Right cardiac atrium (tissue), 5 donors: ENCODE measurements at regions of chr14 and their contacts with region 1.

Region 1: DNA sequence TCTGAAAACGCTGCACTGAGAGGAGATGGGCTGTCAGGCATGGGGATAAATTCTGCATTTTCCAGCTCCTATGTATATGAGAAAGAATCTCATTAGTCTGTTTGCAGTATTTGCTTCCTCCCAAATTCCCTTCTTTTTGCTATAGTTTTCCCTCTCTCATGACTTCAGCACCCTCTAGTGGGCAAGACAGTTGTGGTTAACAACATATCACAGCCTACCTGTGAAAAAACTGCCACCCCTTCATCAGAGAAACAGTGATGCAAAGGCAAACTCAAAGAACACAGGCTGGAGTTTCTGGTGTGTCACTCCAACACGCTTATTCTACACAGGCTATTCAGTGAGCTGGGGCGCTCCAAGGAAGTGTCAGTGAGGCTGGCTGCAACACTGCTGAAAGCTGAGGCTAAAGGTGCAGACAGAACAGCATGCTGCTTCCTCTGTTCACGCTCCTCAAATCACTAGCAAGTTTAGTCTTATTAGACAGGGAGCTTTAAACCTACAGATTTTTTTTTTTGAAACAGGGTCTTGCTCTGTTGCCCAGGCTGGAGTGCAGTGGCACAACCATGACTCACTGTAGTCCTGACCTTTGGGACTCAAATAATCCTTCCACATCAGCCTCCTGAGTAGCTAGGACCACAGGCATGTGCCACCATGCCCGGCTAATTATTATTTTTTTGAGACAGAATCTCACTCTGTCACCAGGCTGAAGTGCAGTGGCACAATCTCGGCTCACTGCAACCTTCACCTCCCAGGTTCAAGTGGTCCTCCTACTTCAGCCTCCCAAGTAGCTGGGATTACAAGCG is 19.3 kb downstream of the ZC2HC1C start:
- DNase-seq: no peak
- ATAC-seq: peak; percentile 67 to 79
- H3K4me3 ChIP-seq: no peak overlapping the region
- H3K27ac ChIP-seq: no peak overlapping the region
- H3K4me1 ChIP-seq: no peaks in the 10 kb centered on the region
- H3K27me3 ChIP-seq: no peaks in the 10 kb centered on the region

Region 2: GRCh38 chr14:74860906-74861733 is 227.7 kb before region 1 on chr14:
- intact Hi-C with region 1: loop called in 1 of 4 experiments (anchors 5 kb)
- DNase-seq: peak; percentile 89 to 97 (median 94)
- ATAC-seq: peak; percentile 75 to 82
- H3K4me3 ChIP-seq: no peak overlapping the region
- H3K27ac ChIP-seq: no peak overlapping the region
- H3K4me1 ChIP-seq: no peaks in the 10 kb centered on the region
- H3K27me3 ChIP-seq: no peaks in the 10 kb centered on the region

Region 3: GRCh38 chr14:74913986-74914573 is 174.7 kb before region 1 on chr14:
- intact Hi-C with region 1: loop called in 3 of 4 experiments (anchors 2 to 10 kb)
- DNase-seq: peak; percentile 75 to 90 (median 85)
- ATAC-seq: peak; percentile 47 to 50
- H3K4me3 ChIP-seq: no peak overlapping the region
- H3K27ac ChIP-seq: no peak overlapping the region
- H3K4me1 ChIP-seq: peaks cover 16% of the 10 kb centered on the region
- H3K27me3 ChIP-seq: no peaks in the 10 kb centered on the region

Region 4: DNA sequence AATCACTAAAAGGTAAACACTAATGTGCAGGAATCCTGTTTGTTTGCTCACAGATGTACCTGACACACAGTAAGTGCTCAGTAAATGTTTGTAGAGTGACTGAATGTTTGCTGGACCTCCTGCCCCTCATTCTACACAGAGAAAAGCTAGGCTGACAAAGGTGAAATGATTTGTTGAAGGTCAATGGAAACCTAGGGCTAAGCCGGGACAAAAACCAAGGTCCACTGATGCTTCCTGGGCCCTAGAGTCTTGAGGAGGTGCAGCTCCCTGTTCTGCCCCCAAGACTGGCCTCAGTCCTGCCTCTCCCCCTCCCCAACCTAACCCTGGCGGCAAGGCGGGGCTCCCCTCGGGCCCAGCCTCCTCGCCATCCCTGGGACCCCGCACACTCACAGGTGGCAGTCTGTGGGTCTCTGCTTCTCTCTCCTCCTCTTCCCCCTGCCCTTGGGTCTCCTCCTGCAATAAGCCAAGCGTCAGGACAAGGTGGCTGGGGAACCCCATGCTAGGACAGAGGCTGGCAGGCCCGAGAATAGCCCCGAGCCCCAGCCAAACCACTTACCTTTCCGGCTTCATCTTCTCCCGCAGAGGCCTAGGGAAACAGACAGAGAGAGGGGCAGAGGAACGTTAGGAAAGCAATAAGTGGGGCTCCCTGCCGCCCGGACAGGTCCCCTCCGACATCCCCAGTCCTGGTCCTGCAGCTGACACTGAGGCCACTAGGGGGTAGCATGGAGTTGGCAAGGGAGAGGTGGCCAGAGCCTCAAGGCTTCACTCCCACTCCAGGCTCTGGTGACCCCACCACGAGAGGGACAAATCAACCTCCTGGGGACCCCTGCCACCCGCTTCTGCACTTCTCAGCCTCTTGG is 142.7 kb before region 1 on chr14:
- intact Hi-C with region 1: loop called in 3 of 4 experiments (anchors 2 to 10 kb)
- DNase-seq: peak; percentile 77 to 91 (median 88)
- ATAC-seq: peak; percentile 77 to 81
- H3K4me3 ChIP-seq: no peak overlapping the region
- H3K27ac ChIP-seq: no peak overlapping the region
- H3K4me1 ChIP-seq: peaks cover 14% of the 10 kb centered on the region
- H3K27me3 ChIP-seq: no peaks in the 10 kb centered on the region